ENCODE measurements at regions of chr2 and their contacts with region 1.

Region 1: GRCh38 chr2:84526562-84526961 is 10.3 kb downstream of the DNAH6 start:
- DNase-seq: peak in 1 of 35 experiments; percentile 30
- ATAC-seq: peak in 1 of 4 experiments; percentile 43
- H3K4me3 ChIP-seq: no peak overlapping the region
- H3K4me3 Mint-ChIP-seq: no peak overlapping the region
- H3K27ac ChIP-seq: no peak overlapping the region
- H3K27ac Mint-ChIP-seq: peak overlapping the region in 1 of 2 donors; percentile 73
- H3K4me1 ChIP-seq: peaks cover 0 to 9% of the 10 kb centered on the region in 2 experiments
- H3K4me1 Mint-ChIP-seq: peaks cover 16 to 26% (median 18%) of the 10 kb centered on the region in 3 donors
- H3K27me3 ChIP-seq: no peaks in the 10 kb centered on the region
- H3K27me3 Mint-ChIP-seq: no peaks in the 10 kb centered on the region

Region 2: DNA sequence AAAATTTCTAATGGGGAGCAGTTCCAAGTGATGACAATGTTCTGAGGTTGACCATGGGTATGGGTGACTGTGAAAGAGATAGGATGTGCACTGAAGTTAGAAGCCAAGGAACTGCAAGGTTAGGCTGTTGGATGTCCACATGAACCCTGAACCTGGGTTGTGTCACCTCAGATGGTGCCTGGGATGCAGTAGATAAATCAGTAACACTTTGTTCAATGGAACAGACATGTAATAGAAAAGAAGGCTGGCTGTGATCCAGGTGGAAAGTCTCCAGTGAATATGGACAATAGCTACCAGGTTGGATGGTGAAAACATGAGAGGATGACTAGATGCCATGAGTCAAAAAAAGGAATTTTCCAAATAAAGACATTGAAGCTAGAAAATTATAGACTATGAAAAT is 222.9 kb after region 1 on chr2:
- CTCF ChIA-PET with region 1: no interaction called
- POLR2A ChIA-PET with region 1: interaction called, 7 to 12 read pairs
- DNase-seq: no peak
- ATAC-seq: no peak
- H3K4me3 ChIP-seq: no peak overlapping the region
- H3K4me3 Mint-ChIP-seq: no peak overlapping the region
- H3K27ac ChIP-seq: no peak overlapping the region
- H3K27ac Mint-ChIP-seq: no peak overlapping the region
- H3K4me1 ChIP-seq: no peaks in the 10 kb centered on the region
- H3K4me1 Mint-ChIP-seq: peaks cover 0 to 24% (median 2%) of the 10 kb centered on the region in 3 donors
- H3K27me3 ChIP-seq: no peaks in the 10 kb centered on the region
- H3K27me3 Mint-ChIP-seq: no peaks in the 10 kb centered on the region